Ascending aorta (tissue), 2 donors: ENCODE measurements at regions of chr17 and their contacts with region 1.

Region 1: DNA sequence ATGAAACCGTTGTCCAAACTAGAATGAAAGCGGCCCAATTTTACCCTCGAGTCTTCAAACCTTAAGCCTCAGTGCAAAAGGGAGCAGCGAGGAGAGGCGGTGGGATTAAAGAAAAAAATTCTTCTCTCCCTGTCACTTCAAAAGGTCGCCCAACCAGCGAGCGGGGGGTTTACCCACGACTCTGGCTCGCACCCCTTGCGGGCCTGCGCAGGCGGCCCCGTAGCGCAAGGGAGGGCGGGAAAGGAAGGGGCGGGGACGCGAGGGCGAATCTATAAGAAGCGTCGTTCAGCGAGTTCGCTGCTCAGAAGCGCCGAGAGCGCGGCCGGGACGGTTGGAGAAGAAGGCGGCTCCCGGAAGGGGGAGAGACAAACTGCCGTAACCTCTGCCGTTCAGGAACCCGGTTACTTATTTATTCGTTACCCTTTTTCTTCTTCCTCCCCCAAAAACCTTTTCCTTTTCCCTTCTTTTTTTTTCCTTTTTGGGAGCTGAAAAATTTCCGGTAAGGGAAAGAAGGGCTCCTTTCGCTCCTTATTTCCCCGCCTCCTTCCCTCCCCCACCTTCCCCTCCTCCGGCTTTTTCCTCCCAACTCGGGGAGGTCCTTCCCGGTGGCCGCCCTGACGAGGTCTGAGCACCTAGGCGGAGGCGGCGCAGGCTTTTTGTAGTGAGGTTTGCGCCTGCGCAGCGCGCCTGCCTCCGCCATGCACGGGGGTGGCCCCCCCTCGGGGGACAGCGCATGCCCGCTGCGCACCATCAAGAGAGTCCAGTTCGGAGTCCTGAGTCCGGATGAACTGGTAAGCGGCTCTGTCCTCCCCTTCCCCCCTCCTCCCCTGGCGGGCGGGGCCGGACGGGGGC is at the start of gene POLR2A:
- DNase-seq: peak; percentile 96 to 99
- H3K4me3 ChIP-seq: peak within 1 kb of the TSS; percentile 71 to 84
- H3K27ac ChIP-seq: peak within 1 kb of the TSS; percentile 98 to 100
- H3K4me1 ChIP-seq: peaks cover 12 to 50% of the 10 kb centered on the region in 2 donors
- H3K27me3 ChIP-seq: no peaks in the 10 kb centered on the region
- CTCF ChIP-seq: no peak
- total RNA-seq, gene POLR2A: 69.5 TPM

Region 2: GRCh38 chr17:7403977-7404736 is 80.1 kb before region 1 on chr17 and contains the start of gene TMEM256:
- intact Hi-C with region 1: loop called (anchors 1 kb)
- DNase-seq: peak; percentile 97 to 100
- H3K4me3 ChIP-seq: peak within 1 kb of the TSS; percentile 69 to 85
- H3K27ac ChIP-seq: peak within 1 kb of the TSS; percentile 89 to 92
- H3K4me1 ChIP-seq: peaks cover 0 to 22% of the 10 kb centered on the region in 2 donors
- H3K27me3 ChIP-seq: no peaks in the 10 kb centered on the region
- CTCF ChIP-seq: peak in 2 of 3 experiments; percentile 5 to 25
- total RNA-seq, gene TMEM256: 241 TPM

Region 3: GRCh38 chr17:7454980-7455379 is 29.3 kb before region 1 on chr17:
- intact Hi-C with region 1: loop called (anchors 2 kb)
- DNase-seq: no peak
- H3K4me3 ChIP-seq: peak overlapping the region; percentile 73 to 80
- H3K27ac ChIP-seq: peak overlapping the region in 1 of 2 donors; percentile 74
- H3K4me1 ChIP-seq: peaks cover 0 to 5% of the 10 kb centered on the region in 2 donors
- H3K27me3 ChIP-seq: no peaks in the 10 kb centered on the region
- CTCF ChIP-seq: no peak

Region 4: GRCh38 chr17:7572588-7573323 is 88.5 kb after region 1 on chr17:
- intact Hi-C with region 1: loop called (anchors 1 kb)
- DNase-seq: peak; percentile 99 to 100
- H3K4me3 ChIP-seq: peak overlapping the region; percentile 78 to 94
- H3K27ac ChIP-seq: peak overlapping the region; percentile 93 to 99
- H3K4me1 ChIP-seq: peaks cover 0 to 15% of the 10 kb centered on the region in 2 donors
- H3K27me3 ChIP-seq: no peaks in the 10 kb centered on the region
- CTCF ChIP-seq: no peak

Region 5: GRCh38 chr17:7856883-7857723 is 372.8 kb after region 1 on chr17 and contains the start of gene NAA38:
- intact Hi-C with region 1: loop called (anchors 10 kb)
- DNase-seq: peak; percentile 92 to 99
- H3K4me3 ChIP-seq: peak within 1 kb of the TSS; percentile 73 to 76
- H3K27ac ChIP-seq: peak within 1 kb of the TSS; percentile 87 to 88
- H3K4me1 ChIP-seq: peaks cover 9 to 25% of the 10 kb centered on the region in 2 donors
- H3K27me3 ChIP-seq: no peaks in the 10 kb centered on the region
- CTCF ChIP-seq: peak; percentile 39 to 55 (median 51)
- total RNA-seq, gene NAA38: 59.0 TPM